ENCODE measurements at regions of chr14 and their contacts with region 1.

Region 1: GRCh38 chr14:43258396-43258795 is 1248.7 kb downstream of the FSCB start:
- DNase-seq: no peak
- ATAC-seq: no peak
- H3K4me3 ChIP-seq: no peak overlapping the region
- H3K27ac ChIP-seq: no peak overlapping the region
- H3K4me1 ChIP-seq: no peaks in the 10 kb centered on the region
- H3K27me3 ChIP-seq: no peaks in the 10 kb centered on the region
- CTCF ChIP-seq: no peak

Region 2: GRCh38 chr14:43243168-43243567 is 15.2 kb before region 1 on chr14:
- CTCF ChIA-PET with region 1: no interaction called
- POLR2A ChIA-PET with region 1: interaction called, 12 read pairs
- in situ Hi-C with region 1: no loop called
- intact Hi-C with region 1: no loop called
- DNase-seq: no peak
- ATAC-seq: no peak
- H3K4me3 ChIP-seq: no peak overlapping the region
- H3K27ac ChIP-seq: no peak overlapping the region
- H3K4me1 ChIP-seq: no peaks in the 10 kb centered on the region
- H3K27me3 ChIP-seq: no peaks in the 10 kb centered on the region
- CTCF ChIP-seq: no peak

Measured in Panc1 (cell line).